ENCODE measurements at regions of chr15 and their contacts with region 1.

Region 1: GRCh38 chr15:49145651-49146609 is 9.5 kb downstream of the COPS2 start:
- DNase-seq: peak in 1 of 2 donors; percentile 26
- ATAC-seq: peak in 1 of 8 donors; percentile 56
- H3K4me3 ChIP-seq: no peak overlapping the region
- H3K27ac ChIP-seq: no peak overlapping the region
- H3K4me1 ChIP-seq: peaks cover 0 to 56% (median 46%) of the 10 kb centered on the region in 9 donors
- H3K27me3 ChIP-seq: no peaks in the 10 kb centered on the region
- CTCF ChIP-seq: peak; percentile 33 to 78 (median 70)

Region 2: DNA sequence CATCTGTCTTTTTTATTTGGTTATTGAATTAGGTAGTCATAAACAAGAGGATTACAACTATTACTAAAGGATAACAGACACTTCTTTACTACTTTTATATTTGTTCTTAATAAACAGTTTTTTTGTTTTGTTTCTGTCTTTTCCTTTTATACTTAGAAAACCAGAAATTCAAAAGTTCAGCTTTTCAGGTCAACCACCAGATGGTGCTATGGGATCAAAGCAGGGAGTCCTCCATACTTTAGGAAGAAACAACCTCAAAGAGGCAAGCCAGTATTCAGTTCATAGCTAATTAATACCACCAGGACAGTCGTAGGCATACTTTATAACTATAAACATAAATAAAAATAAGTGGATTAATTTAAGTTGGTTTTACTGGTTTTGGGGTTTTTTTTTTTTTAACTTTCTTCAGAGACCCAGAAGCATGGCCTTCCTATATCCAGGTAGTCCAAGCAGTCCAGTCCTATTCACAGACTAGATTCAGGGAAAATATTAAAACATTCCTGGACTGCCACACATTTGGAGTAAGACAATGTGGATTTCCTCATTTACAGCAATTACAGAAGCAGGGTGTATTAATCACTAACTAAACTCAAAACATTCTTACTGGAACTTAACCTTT is 284.0 kb before region 1 on chr15:
- intact Hi-C with region 1: loop called (anchors 2 to 10 kb)
- DNase-seq: peak in 1 of 2 donors; percentile 33
- ATAC-seq: peak in 7 of 8 donors; percentile 51 to 80 (median 67)
- H3K4me3 ChIP-seq: no peak overlapping the region
- H3K27ac ChIP-seq: no peak overlapping the region
- H3K4me1 ChIP-seq: peaks cover 0 to 5% (median 0%) of the 10 kb centered on the region in 9 donors
- H3K27me3 ChIP-seq: no peaks in the 10 kb centered on the region
- CTCF ChIP-seq: peak; percentile 84 to 95 (median 90)

Region 3: GRCh38 chr15:48868536-48868935 is 277.4 kb before region 1 on chr15:
- intact Hi-C with region 1: loop called (anchors 2 to 10 kb)
- DNase-seq: no peak
- ATAC-seq: peak in 1 of 8 donors; percentile 55
- H3K4me3 ChIP-seq: no peak overlapping the region
- H3K27ac ChIP-seq: peak overlapping the region in 1 of 10 donors; percentile 15
- H3K4me1 ChIP-seq: peaks cover 0 to 18% (median 0%) of the 10 kb centered on the region in 9 donors
- H3K27me3 ChIP-seq: peaks cover 0 to 4% (median 0%) of the 10 kb centered on the region in 7 donors
- CTCF ChIP-seq: no peak

Region 4: GRCh38 chr15:48877630-48878595 is 268.0 kb before region 1 on chr15 and contains the start of gene EID1:
- intact Hi-C with region 1: loop called in 2 of 10 experiments (anchors 5 kb)
- DNase-seq: peak; percentile 92 to 94
- ATAC-seq: peak; percentile 99 to 100 (median 100)
- H3K4me3 ChIP-seq: peak within 1 kb of the TSS; percentile 45 to 89 (median 77)
- H3K27ac ChIP-seq: peak within 1 kb of the TSS; percentile 46 to 95 (median 88)
- H3K4me1 ChIP-seq: peaks cover 0 to 28% (median 19%) of the 10 kb centered on the region in 9 donors
- H3K27me3 ChIP-seq: peaks cover 0 to 5% (median 0%) of the 10 kb centered on the region in 7 donors
- CTCF ChIP-seq: peak in 2 of 9 donors; percentile 9 to 12
- total RNA-seq, gene EID1: 174 to 255 (median 225) TPM

Region 5: DNA sequence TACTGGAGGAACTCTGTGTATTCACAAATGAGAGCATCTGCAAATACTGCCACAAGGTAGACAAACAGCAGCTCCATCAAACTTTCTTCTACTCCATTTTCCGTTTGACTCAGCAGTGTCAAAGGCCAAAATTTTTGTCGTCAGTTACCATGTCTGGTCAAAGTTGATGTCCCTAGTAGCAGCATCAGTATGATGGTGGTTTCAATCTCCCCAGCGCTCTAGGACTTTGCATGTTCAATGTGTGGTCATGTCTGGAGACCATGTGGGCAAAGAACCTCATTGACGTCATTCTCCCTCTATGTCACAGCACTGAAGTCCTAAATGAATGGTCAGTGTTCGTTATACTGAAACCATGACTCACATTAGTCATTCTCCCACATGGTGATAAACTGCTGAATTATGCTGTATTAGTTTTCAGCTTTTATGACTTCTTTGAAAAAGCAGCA is 205.5 kb before region 1 on chr15:
- intact Hi-C with region 1: no loop called
- DNase-seq: no peak
- ATAC-seq: no peak
- H3K4me3 ChIP-seq: no peak overlapping the region
- H3K27ac ChIP-seq: no peak overlapping the region
- H3K4me1 ChIP-seq: peaks cover 0 to 18% (median under 1%) of the 10 kb centered on the region in 9 donors
- H3K27me3 ChIP-seq: no peaks in the 10 kb centered on the region
- CTCF ChIP-seq: no peak

Region 6: GRCh38 chr15:49036650-49037545 is 109.0 kb before region 1 on chr15:
- intact Hi-C with region 1: loop called in 6 of 10 experiments (anchors 5 to 10 kb)
- DNase-seq: no peak
- ATAC-seq: no peak
- H3K4me3 ChIP-seq: no peak overlapping the region
- H3K27ac ChIP-seq: peak overlapping the region in 1 of 10 donors; percentile 38
- H3K4me1 ChIP-seq: peaks cover 3 to 52% (median 38%) of the 10 kb centered on the region in 9 donors
- H3K27me3 ChIP-seq: no peaks in the 10 kb centered on the region
- CTCF ChIP-seq: no peak

Region 7: GRCh38 chr15:49046220-49047102 is 99.5 kb before region 1 on chr15 and contains the start of gene SECISBP2L:
- intact Hi-C with region 1: loop called in 6 of 10 experiments (anchors 5 to 10 kb)
- DNase-seq: peak; percentile 93 to 96
- ATAC-seq: peak; percentile 97 to 99 (median 99)
- H3K4me3 ChIP-seq: peak within 1 kb of the TSS; percentile 70 to 100 (median 92)
- H3K27ac ChIP-seq: peak within 1 kb of the TSS; percentile 51 to 97 (median 90)
- H3K4me1 ChIP-seq: peaks cover 0 to 45% (median 32%) of the 10 kb centered on the region in 9 donors
- H3K27me3 ChIP-seq: no peaks in the 10 kb centered on the region
- CTCF ChIP-seq: peak in 7 of 9 donors; percentile 19 to 57 (median 37)
- total RNA-seq, gene SECISBP2L: 29.8 to 49.8 (median 44.0) TPM

Region 8: GRCh38 chr15:49301562-49301961 is 155.6 kb after region 1 on chr15:
- intact Hi-C with region 1: no loop called
- DNase-seq: no peak
- ATAC-seq: no peak
- H3K4me3 ChIP-seq: no peak overlapping the region
- H3K27ac ChIP-seq: no peak overlapping the region
- H3K4me1 ChIP-seq: peaks cover 0 to 4% (median 0%) of the 10 kb centered on the region in 9 donors
- H3K27me3 ChIP-seq: no peaks in the 10 kb centered on the region
- CTCF ChIP-seq: no peak

Measured in heart right ventricle (tissue), 16 donors.